ENCODE measurements at regions of chr15 and their contacts with region 1.

Region 1: GRCh38 chr15:37291920-37292319 is 191.6 kb upstream of the MEIS2 start:
- DNase-seq: no peak
- H3K4me3 ChIP-seq: no peak overlapping the region
- H3K27ac ChIP-seq: no peak overlapping the region
- H3K4me1 ChIP-seq: no peaks in the 10 kb centered on the region
- H3K27me3 ChIP-seq: no peaks in the 10 kb centered on the region
- CTCF ChIP-seq: no peak

Region 2: GRCh38 chr15:36294359-36294758 is 997.6 kb before region 1 on chr15:
- CTCF ChIA-PET with region 1: no interaction called
- POLR2A ChIA-PET with region 1: interaction called, 10 read pairs
- intact Hi-C with region 1: no loop called
- DNase-seq: peak; percentile 33
- H3K4me3 ChIP-seq: no peak overlapping the region
- H3K27ac ChIP-seq: no peak overlapping the region
- H3K4me1 ChIP-seq: no peaks in the 10 kb centered on the region
- H3K27me3 ChIP-seq: peaks cover 71% of the 10 kb centered on the region
- CTCF ChIP-seq: no peak

Region 3: DNA sequence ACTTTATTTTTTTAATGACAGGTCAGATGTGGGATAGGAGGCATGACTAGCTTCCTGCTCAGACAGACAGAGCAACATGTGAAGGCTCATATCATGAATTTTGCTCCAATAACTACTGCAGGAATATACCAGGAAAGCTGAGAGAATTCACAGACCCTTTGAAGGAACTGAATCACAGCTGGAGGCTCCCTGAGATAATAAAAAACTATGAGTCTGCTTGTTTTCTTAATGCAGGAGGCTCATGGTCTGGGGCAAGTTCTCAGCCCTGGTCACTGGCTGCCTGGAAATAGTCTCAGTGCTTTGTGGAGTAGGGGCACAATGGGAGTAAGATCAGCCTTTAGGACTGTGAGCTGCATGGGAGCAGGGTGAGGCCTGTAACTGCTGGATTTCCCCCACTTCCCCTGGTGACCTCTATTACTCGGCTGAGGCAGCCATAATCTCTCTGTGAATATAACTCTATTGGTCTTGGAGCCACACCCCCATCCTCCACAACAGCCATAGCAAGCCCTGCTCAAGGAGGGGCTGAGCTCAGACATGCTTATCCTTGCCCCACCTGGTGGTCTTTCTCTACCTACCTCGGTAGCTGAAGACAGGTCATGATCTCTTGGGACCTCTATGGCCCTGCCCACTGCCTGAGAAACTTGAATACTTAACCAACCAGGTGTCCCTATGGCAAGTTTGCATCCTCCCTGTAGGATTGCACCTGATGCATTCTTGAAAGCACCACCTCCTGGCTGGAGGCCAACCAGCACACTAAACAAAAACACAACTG is 360.9 kb after region 1 on chr15:
- CTCF ChIA-PET with region 1: no interaction called
- POLR2A ChIA-PET with region 1: no interaction called
- intact Hi-C with region 1: no loop called
- DNase-seq: no peak
- H3K4me3 ChIP-seq: no peak overlapping the region
- H3K27ac ChIP-seq: no peak overlapping the region
- H3K4me1 ChIP-seq: no peaks in the 10 kb centered on the region
- H3K27me3 ChIP-seq: no peaks in the 10 kb centered on the region
- CTCF ChIP-seq: no peak